CD8-positive, alpha-beta T cell (primary cell): ENCODE measurements at regions of chr15 and their contacts with region 1.

Region 1: GRCh38 chr15:68875377-68876116 is 54.8 kb upstream of the SPESP1 start:
- DNase-seq: peak; percentile 76 to 97 (median 89)
- ATAC-seq: peak; percentile 81
- H3K4me3 ChIP-seq: no peak overlapping the region
- H3K4me3 Mint-ChIP-seq: peak overlapping the region; percentile 20
- H3K27ac ChIP-seq: no peak overlapping the region
- H3K27ac Mint-ChIP-seq: no peak overlapping the region
- H3K4me1 ChIP-seq: peaks cover 4% of the 10 kb centered on the region
- H3K4me1 Mint-ChIP-seq: peaks cover 4% of the 10 kb centered on the region
- H3K27me3 ChIP-seq: peaks cover 0 to 14% of the 10 kb centered on the region in 2 experiments
- H3K27me3 Mint-ChIP-seq: peaks cover 20% of the 10 kb centered on the region
- CTCF ChIP-seq: peak; percentile 80

Region 2: DNA sequence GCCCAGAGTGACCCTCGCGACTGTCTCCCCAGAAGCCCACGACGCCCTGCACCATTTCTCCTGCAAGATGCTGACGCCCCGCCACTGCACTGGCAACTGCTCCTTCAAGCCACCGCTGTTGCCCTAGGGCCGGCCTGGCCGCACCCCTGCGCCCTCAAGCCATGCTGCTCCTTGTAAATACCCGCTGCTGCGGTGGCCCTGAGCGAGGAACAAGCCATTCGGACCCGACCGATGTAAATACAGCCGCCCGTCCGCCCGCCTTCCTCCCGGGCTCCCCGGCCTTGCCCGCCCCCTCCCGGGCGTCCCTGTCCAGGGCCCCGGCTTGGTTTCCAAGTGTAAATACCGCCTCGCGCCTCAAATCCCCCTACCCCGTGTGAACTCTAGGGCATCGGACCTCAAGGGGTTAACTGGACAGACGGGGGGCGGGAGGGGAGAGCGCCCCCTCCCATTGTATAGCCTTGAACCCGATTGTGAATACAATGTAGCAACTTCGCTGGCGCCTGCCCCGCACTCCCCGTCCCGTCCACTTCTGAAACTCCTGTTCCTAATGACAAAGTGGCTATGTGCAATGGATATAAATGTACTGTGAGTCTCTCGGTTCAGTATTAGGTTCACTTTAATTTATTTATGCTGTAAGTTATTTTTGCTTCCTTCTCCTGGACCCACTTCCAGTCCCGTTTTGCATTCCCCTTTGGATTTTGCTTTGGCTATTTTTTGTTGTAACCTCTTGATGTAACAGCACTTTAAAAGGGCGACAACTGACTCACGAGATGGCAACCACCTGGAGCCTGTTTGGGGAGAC is 1041.6 kb before region 1 on chr15:
- CTCF ChIA-PET with region 1: no interaction called
- POLR2A ChIA-PET with region 1: no interaction called
- intact Hi-C with region 1: no loop called
- DNase-seq: peak in 5 of 9 experiments; percentile 30 to 69 (median 47)
- ATAC-seq: peak; percentile 37
- H3K4me3 ChIP-seq: peak overlapping the region; percentile 42 to 51
- H3K4me3 Mint-ChIP-seq: peak overlapping the region; percentile 83
- H3K27ac ChIP-seq: no peak overlapping the region
- H3K27ac Mint-ChIP-seq: no peak overlapping the region
- H3K4me1 ChIP-seq: peaks cover 48% of the 10 kb centered on the region
- H3K4me1 Mint-ChIP-seq: peaks cover 51% of the 10 kb centered on the region
- H3K27me3 ChIP-seq: peaks cover 46 to 57% of the 10 kb centered on the region in 2 experiments
- H3K27me3 Mint-ChIP-seq: peaks cover 53% of the 10 kb centered on the region
- CTCF ChIP-seq: peak; percentile 40

Region 3: DNA sequence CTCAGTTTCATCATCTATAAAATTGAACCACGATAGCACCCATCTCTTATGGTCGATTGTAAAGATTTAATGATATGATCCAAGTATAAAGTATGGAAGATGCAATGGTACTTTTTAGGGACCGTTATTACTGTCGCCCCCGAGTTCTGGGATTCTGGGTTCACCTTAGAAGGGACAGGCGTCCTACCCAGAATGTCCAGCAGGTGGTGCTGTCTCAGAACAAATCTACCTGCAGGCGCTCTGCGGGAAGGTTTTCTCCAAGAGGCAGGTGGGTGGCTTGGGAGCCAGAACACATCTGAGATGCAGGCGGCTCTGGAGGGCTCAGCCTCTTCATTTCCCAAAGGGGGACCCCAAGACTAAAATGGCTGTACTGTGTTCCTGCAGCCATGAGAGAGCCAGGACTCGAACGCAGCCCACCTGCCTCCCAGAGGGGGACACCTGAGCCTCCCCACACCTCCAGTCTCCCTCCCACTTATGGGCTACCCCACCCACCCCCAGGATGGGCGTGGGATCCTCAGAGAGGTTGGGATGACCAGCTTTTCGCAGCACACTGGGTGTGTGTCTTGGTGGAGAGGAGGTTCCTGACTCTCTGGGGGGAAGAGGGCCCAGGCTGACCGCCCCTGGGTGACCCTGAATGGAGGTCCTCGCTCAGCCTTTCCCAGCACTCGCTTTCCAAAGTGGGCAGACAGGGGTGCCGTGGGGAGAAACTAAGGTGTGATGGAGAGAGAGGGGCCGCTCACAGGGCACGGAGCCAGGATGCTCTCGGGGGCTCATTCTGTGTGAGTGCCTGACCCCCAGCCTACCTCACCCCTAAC is 324.9 kb before region 1 on chr15:
- CTCF ChIA-PET with region 1: interaction called, 52 read pairs
- POLR2A ChIA-PET with region 1: interaction called, 3 read pairs
- intact Hi-C with region 1: loop called (anchors 2 kb)
- DNase-seq: peak; percentile 46 to 83 (median 67)
- ATAC-seq: no peak
- H3K4me3 ChIP-seq: no peak overlapping the region
- H3K4me3 Mint-ChIP-seq: no peak overlapping the region
- H3K27ac ChIP-seq: no peak overlapping the region
- H3K27ac Mint-ChIP-seq: no peak overlapping the region
- H3K4me1 ChIP-seq: no peaks in the 10 kb centered on the region
- H3K4me1 Mint-ChIP-seq: no peaks in the 10 kb centered on the region
- H3K27me3 ChIP-seq: peaks cover 2 to 5% of the 10 kb centered on the region in 2 experiments
- H3K27me3 Mint-ChIP-seq: peaks cover 42% of the 10 kb centered on the region
- CTCF ChIP-seq: peak; percentile 89

Region 4: GRCh38 chr15:68672781-68673205 is 202.8 kb before region 1 on chr15:
- CTCF ChIA-PET with region 1: interaction called, 14 read pairs
- POLR2A ChIA-PET with region 1: no interaction called
- intact Hi-C with region 1: no loop called
- DNase-seq: no peak
- ATAC-seq: no peak
- H3K4me3 ChIP-seq: no peak overlapping the region
- H3K4me3 Mint-ChIP-seq: no peak overlapping the region
- H3K27ac ChIP-seq: no peak overlapping the region
- H3K27ac Mint-ChIP-seq: no peak overlapping the region
- H3K4me1 ChIP-seq: no peaks in the 10 kb centered on the region
- H3K4me1 Mint-ChIP-seq: peaks cover 4% of the 10 kb centered on the region
- H3K27me3 ChIP-seq: no peaks in the 10 kb centered on the region
- H3K27me3 Mint-ChIP-seq: peaks cover 10% of the 10 kb centered on the region
- CTCF ChIP-seq: no peak

Region 5: DNA sequence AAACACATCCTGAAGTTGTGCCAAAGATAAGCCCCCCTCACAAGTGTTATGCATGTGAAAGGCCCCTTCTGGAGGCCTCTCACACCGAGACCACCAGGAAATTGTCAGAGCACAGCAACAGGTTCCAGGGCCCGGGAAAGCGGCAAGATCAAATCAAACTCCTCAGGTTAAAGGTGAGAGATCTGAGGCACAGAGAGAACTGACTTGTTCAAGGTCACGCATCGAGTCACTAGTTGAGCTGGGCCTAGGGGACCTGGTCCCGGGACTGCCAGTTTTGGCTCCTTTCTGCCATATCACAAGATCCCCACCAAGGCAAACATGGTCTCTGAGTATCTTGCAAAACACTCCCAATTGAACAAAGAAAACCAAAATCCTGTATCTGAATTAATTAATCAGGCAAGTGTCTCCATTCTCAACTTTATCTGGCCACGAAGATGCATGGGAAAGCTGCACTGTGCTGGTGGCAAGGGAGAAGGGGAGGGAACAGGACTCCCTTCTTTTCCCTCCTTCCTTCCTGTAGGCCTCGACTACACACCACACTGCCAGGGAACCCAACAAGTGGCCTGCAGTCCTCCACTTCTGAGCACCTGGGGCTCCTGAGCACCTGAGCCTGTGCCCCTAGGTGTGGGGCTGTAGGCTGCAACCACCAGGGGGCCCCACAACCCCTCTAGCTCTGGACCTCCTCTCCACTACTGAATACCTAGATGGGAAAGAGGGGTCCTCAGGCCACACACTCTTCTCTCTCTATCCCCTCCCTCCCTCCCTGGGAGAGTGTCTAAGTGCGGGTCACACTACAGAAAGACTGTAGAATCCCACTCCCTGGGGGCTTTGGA is 92.1 kb before region 1 on chr15:
- CTCF ChIA-PET with region 1: interaction called, 56 read pairs
- POLR2A ChIA-PET with region 1: interaction called, 3 read pairs
- intact Hi-C with region 1: loop called (anchors 1 kb)
- DNase-seq: peak; percentile 39 to 79 (median 72)
- ATAC-seq: peak; percentile 90
- H3K4me3 ChIP-seq: no peak overlapping the region
- H3K4me3 Mint-ChIP-seq: no peak overlapping the region
- H3K27ac ChIP-seq: no peak overlapping the region
- H3K27ac Mint-ChIP-seq: peak overlapping the region; percentile 93
- H3K4me1 ChIP-seq: peaks cover 23% of the 10 kb centered on the region
- H3K4me1 Mint-ChIP-seq: peaks cover 34% of the 10 kb centered on the region
- H3K27me3 ChIP-seq: no peaks in the 10 kb centered on the region
- H3K27me3 Mint-ChIP-seq: no peaks in the 10 kb centered on the region
- CTCF ChIP-seq: peak; percentile 77

Region 6: GRCh38 chr15:68829068-68829467 is 46.5 kb before region 1 on chr15:
- CTCF ChIA-PET with region 1: interaction called, 14 read pairs
- POLR2A ChIA-PET with region 1: no interaction called
- intact Hi-C with region 1: loop called in 1 of 2 experiments (anchors 10 kb)
- DNase-seq: peak in 5 of 9 experiments; percentile 21 to 72 (median 31)
- ATAC-seq: peak; percentile 89
- H3K4me3 ChIP-seq: no peak overlapping the region
- H3K4me3 Mint-ChIP-seq: no peak overlapping the region
- H3K27ac ChIP-seq: no peak overlapping the region
- H3K27ac Mint-ChIP-seq: no peak overlapping the region
- H3K4me1 ChIP-seq: peaks cover 6% of the 10 kb centered on the region
- H3K4me1 Mint-ChIP-seq: peaks cover 12% of the 10 kb centered on the region
- H3K27me3 ChIP-seq: no peaks in the 10 kb centered on the region
- H3K27me3 Mint-ChIP-seq: peaks cover 4% of the 10 kb centered on the region
- CTCF ChIP-seq: peak; percentile 63